Activated naive CD4-positive, alpha-beta T cell treated with anti-CD3 and anti-CD28 coated beads for 36 hours (primary cell): ENCODE measurements at regions of chr9 and their contacts with region 1.

Region 1: GRCh38 chr9:131733541-131734061 is 6.3 kb downstream of the RAPGEF1 start:
- DNase-seq: peak; percentile 58
- H3K4me3 Mint-ChIP-seq: peak overlapping the region; percentile 69
- H3K27ac Mint-ChIP-seq: peak overlapping the region; percentile 93
- H3K4me1 Mint-ChIP-seq: peaks cover 90% of the 10 kb centered on the region
- H3K27me3 Mint-ChIP-seq: no peaks in the 10 kb centered on the region

Region 2: GRCh38 chr9:131366761-131367401 is 366.7 kb before region 1 on chr9:
- CTCF ChIA-PET with region 1: no interaction called
- intact Hi-C with region 1: loop called (anchors 2 kb)
- DNase-seq: peak; percentile 25
- H3K4me3 Mint-ChIP-seq: no peak overlapping the region
- H3K27ac Mint-ChIP-seq: no peak overlapping the region
- H3K4me1 Mint-ChIP-seq: peaks cover 3% of the 10 kb centered on the region
- H3K27me3 Mint-ChIP-seq: no peaks in the 10 kb centered on the region

Region 3: DNA sequence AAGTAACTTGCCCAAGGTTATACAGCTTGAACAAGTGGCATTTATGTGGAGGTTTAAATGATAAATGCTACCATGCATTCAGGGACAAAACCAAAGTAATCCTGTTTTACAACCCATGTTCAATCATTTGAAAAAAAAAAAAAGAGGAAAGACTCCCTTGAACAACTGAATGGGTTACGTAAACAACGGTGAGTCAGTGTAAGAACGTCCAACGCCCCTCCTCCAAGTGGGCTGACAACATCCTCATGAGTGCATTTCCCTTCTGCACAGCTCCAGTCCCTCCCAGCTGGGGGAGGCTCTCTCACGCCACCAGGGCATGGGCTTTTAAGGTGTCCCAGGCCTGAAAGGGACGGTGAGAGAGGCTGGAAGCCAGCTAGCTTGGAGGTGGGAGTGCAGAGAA is 98.3 kb before region 1 on chr9:
- CTCF ChIA-PET with region 1: interaction called, 3 read pairs
- intact Hi-C with region 1: loop called (anchors 2 kb)
- DNase-seq: peak; percentile 92
- H3K4me3 Mint-ChIP-seq: no peak overlapping the region
- H3K27ac Mint-ChIP-seq: peak overlapping the region; percentile 89
- H3K4me1 Mint-ChIP-seq: peaks cover 37% of the 10 kb centered on the region
- H3K27me3 Mint-ChIP-seq: no peaks in the 10 kb centered on the region

Region 4: DNA sequence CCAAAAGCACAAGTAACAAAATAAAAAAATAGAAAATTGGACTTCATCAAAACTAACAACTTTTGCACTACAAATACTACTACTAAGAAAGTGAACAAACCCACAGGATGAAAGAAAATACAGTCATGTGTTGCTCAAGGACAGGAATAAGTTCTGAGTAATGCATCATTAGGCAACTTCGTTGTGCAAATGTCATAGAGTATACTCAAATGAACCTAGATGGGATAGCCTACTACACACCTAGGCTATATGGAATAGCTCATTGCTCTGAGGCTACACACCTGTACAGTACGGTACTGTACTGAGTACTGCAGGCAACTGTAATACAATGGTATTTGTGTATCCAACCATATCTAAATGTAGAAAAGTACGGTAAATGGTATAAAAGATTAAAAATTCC is 82.0 kb before region 1 on chr9:
- CTCF ChIA-PET with region 1: interaction called, 4 read pairs
- intact Hi-C with region 1: loop called (anchors 1 kb)
- DNase-seq: peak; percentile 32
- H3K4me3 Mint-ChIP-seq: no peak overlapping the region
- H3K27ac Mint-ChIP-seq: peak overlapping the region; percentile 68
- H3K4me1 Mint-ChIP-seq: peaks cover 48% of the 10 kb centered on the region
- H3K27me3 Mint-ChIP-seq: no peaks in the 10 kb centered on the region

Region 5: GRCh38 chr9:131668439-131669268 is 64.9 kb before region 1 on chr9:
- CTCF ChIA-PET with region 1: interaction called, 4 read pairs
- intact Hi-C with region 1: loop called (anchors 1 kb)
- DNase-seq: peak; percentile 85
- H3K4me3 Mint-ChIP-seq: peak overlapping the region; percentile 60
- H3K27ac Mint-ChIP-seq: peak overlapping the region; percentile 100
- H3K4me1 Mint-ChIP-seq: peaks cover 79% of the 10 kb centered on the region
- H3K27me3 Mint-ChIP-seq: no peaks in the 10 kb centered on the region

Region 6: GRCh38 chr9:131709771-131710454 is 23.7 kb before region 1 on chr9:
- CTCF ChIA-PET with region 1: interaction called, 9 read pairs
- intact Hi-C with region 1: loop called (anchors 1 kb)
- DNase-seq: peak; percentile 38
- H3K4me3 Mint-ChIP-seq: peak overlapping the region; percentile 24
- H3K27ac Mint-ChIP-seq: peak overlapping the region; percentile 75
- H3K4me1 Mint-ChIP-seq: peaks cover 74% of the 10 kb centered on the region
- H3K27me3 Mint-ChIP-seq: no peaks in the 10 kb centered on the region